ENCODE measurements at regions of chr16 and their contacts with region 1.

Region 1: GRCh38 chr16:11094072-11094856 is 149.9 kb downstream of the CLEC16A start:
- DNase-seq: peak; percentile 56
- H3K4me3 Mint-ChIP-seq: peak overlapping the region; percentile 68
- H3K27ac Mint-ChIP-seq: peak overlapping the region; percentile 100
- H3K4me1 Mint-ChIP-seq: peaks cover 70% of the 10 kb centered on the region
- H3K27me3 Mint-ChIP-seq: no peaks in the 10 kb centered on the region

Region 2: GRCh38 chr16:10971560-10971961 is 122.7 kb before region 1 on chr16:
- intact Hi-C with region 1: loop called (anchors 1 kb)
- DNase-seq: peak; percentile 28
- H3K4me3 Mint-ChIP-seq: peak overlapping the region; percentile 41
- H3K27ac Mint-ChIP-seq: peak overlapping the region; percentile 70
- H3K4me1 Mint-ChIP-seq: peaks cover 68% of the 10 kb centered on the region
- H3K27me3 Mint-ChIP-seq: no peaks in the 10 kb centered on the region

Region 3: DNA sequence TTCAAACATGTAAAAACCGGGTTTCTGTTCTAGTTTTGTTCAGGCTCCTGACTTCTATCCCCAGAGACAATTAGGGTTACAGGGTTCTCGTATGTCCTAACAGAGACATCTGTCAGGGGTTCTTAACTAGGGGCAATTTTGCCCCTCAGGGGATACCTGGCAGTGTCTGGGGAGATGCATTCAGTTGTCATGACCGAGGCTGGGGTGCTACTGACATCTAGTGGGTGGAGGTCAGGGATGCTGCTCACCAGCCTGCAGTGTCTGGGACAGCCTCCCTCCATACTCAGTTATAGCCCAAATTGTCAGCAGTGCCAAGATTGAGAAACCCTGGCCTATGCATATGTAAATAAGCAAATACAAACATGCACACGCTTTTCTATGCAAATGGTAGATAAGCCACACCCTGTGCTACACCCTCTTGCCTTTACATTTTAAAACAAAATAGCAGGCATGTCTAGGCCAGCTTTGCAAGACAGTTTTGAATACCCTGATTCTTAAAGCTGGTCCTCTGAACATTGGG is 112.5 kb before region 1 on chr16:
- intact Hi-C with region 1: no loop called
- DNase-seq: peak; percentile 34
- H3K4me3 Mint-ChIP-seq: no peak overlapping the region
- H3K27ac Mint-ChIP-seq: peak overlapping the region; percentile 40
- H3K4me1 Mint-ChIP-seq: peaks cover 73% of the 10 kb centered on the region
- H3K27me3 Mint-ChIP-seq: no peaks in the 10 kb centered on the region

Region 4: GRCh38 chr16:11025120-11025531 is 69.1 kb before region 1 on chr16:
- intact Hi-C with region 1: loop called (anchors 1 kb)
- DNase-seq: no peak
- H3K4me3 Mint-ChIP-seq: no peak overlapping the region
- H3K27ac Mint-ChIP-seq: peak overlapping the region; percentile 82
- H3K4me1 Mint-ChIP-seq: peaks cover 31% of the 10 kb centered on the region
- H3K27me3 Mint-ChIP-seq: no peaks in the 10 kb centered on the region

Region 5: GRCh38 chr16:11076259-11077018 is 17.8 kb before region 1 on chr16:
- intact Hi-C with region 1: loop called (anchors 1 kb)
- DNase-seq: peak; percentile 36
- H3K4me3 Mint-ChIP-seq: peak overlapping the region; percentile 48
- H3K27ac Mint-ChIP-seq: peak overlapping the region; percentile 90
- H3K4me1 Mint-ChIP-seq: peaks cover 94% of the 10 kb centered on the region
- H3K27me3 Mint-ChIP-seq: peaks cover 2% of the 10 kb centered on the region

Region 6: GRCh38 chr16:11128265-11129141 is 34.2 kb after region 1 on chr16:
- intact Hi-C with region 1: loop called (anchors 2 kb)
- DNase-seq: peak; percentile 12
- H3K4me3 Mint-ChIP-seq: peak overlapping the region; percentile 32
- H3K27ac Mint-ChIP-seq: peak overlapping the region; percentile 79
- H3K4me1 Mint-ChIP-seq: peaks cover 68% of the 10 kb centered on the region
- H3K27me3 Mint-ChIP-seq: no peaks in the 10 kb centered on the region

Region 7: DNA sequence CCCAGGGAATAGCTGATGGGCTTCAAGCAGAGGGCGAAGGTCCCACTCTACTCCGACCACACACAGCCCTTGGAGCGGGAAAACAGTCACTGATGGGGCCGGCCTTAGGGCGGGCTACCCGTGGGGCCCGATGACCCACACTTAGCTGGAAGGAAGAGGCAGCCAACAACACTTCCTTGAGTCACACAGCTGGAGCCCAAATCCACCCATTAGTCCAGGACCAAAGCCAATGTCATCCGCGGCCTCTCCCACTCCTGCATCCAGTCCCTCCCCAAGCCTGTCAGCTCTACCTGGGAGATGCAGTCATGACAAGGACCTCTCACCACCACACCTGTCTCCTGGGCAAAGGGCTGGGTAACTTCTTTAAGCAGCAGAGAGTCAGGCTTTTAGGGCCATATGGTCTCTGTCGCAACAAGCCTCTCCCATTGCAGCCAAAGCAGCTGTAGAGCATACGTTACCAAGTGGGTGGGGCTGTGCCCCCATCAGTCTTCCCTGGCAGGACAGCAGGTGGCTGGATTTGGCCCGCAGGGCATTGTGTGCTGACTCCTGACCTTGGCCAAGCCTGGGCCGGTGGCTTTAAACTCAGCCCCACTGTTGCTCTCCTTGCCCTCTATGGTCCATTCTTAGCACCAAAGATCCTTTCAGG is 51.0 kb after region 1 on chr16:
- intact Hi-C with region 1: no loop called
- DNase-seq: no peak
- H3K4me3 Mint-ChIP-seq: no peak overlapping the region
- H3K27ac Mint-ChIP-seq: no peak overlapping the region
- H3K4me1 Mint-ChIP-seq: peaks cover 33% of the 10 kb centered on the region
- H3K27me3 Mint-ChIP-seq: no peaks in the 10 kb centered on the region